ENCODE measurements at regions of chr4 and their contacts with region 1.

Region 1: DNA sequence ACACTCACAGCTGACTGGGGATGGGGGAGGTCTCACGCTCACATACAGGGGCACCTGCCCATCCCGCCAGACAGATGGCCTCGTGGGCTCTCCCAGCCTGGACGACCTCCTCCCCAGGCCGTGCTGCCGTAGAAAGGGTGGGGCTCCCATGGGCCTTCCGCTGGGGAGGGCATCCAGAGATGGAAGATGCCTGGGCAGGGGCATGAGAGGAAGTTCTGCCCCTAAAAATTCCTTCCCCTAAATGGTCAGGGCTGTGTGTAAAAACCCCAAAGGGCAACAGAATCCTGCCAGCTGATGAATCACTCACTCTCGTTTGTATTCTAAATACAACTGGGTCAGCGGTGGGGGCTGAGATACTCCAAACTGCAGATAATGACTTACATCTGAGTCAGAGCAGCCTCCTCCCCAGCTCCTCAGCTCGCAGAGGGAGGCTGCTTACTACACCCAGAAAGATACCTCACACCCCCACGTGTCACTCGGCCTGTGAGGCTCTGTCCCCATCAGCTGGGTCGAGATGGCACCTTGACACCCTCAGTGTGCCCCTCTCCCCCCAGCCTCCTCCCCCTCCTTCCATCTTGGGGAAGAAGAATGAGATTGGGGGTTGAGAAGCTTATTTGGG is 10.1 kb downstream of the WDR1 start:
- DNase-seq: peak; percentile 91
- H3K4me3 ChIP-seq: peak overlapping the region; percentile 16; the same call in 1 of the 2 replicates
- H3K27me3 ChIP-seq: no peaks in the 10 kb centered on the region
- CTCF ChIP-seq: no peak

Region 2: GRCh38 chr4:9735515-9735914 is 371.0 kb before region 1 on chr4:
- CTCF ChIA-PET with region 1: no interaction called
- POLR2A ChIA-PET with region 1: no interaction called
- DNase-seq: no peak
- H3K4me3 ChIP-seq: no peak overlapping the region
- H3K27me3 ChIP-seq: no peaks in the 10 kb centered on the region
- CTCF ChIP-seq: no peak

Region 3: DNA sequence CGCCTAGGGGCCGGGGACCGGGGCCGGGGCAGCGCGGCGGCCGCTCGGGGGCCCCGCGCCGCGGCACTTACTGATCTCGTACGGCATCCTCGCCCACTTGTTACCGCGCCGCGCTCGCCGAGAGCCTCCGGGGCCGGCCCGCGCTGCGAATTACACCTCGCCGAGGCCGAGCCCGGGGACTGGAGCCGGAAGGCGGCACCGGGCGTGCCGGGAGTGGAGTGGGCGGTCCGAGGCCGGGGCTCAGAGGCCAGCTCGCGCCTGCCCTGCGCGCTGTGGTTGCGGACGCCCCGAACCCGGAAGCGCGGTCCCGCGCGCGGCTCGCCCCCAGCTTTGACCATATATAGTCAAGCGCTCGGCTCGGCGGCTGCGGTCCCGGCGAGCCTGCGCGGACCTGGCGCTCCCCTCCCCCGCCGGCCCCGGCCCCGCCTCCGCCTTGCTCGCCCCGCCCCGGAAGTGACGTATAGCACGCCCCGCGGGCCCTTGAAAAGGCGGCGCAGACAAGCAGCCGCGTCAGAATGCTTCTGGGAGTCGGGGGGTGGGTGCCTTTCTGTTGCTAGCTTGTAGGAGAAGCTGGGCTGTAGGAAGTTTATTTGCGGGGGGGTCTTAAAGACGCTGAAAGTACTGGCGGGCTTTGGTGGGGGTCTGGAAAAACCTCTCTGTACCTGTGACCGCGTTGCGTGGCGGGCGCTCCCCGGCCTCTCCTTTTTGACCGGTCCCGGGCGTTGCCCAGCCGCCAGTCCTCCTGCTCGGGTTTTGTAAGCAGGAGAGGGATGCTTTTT is 10.2 kb after region 1 on chr4 and contains the start of gene WDR1:
- CTCF ChIA-PET with region 1: interaction called, 4 read pairs
- POLR2A ChIA-PET with region 1: interaction called, 23 read pairs
- DNase-seq: peak; percentile 71
- H3K4me3 ChIP-seq: peak within 1 kb of the TSS; percentile 90
- H3K27me3 ChIP-seq: no peaks in the 10 kb centered on the region
- CTCF ChIP-seq: no peak
- polyA plus RNA-seq, gene WDR1: 666 and 952 TPM in 2 replicates